Head of caudate nucleus (tissue), 42 donors: ENCODE measurements at regions of chr15 and their contacts with region 1.

Region 1: DNA sequence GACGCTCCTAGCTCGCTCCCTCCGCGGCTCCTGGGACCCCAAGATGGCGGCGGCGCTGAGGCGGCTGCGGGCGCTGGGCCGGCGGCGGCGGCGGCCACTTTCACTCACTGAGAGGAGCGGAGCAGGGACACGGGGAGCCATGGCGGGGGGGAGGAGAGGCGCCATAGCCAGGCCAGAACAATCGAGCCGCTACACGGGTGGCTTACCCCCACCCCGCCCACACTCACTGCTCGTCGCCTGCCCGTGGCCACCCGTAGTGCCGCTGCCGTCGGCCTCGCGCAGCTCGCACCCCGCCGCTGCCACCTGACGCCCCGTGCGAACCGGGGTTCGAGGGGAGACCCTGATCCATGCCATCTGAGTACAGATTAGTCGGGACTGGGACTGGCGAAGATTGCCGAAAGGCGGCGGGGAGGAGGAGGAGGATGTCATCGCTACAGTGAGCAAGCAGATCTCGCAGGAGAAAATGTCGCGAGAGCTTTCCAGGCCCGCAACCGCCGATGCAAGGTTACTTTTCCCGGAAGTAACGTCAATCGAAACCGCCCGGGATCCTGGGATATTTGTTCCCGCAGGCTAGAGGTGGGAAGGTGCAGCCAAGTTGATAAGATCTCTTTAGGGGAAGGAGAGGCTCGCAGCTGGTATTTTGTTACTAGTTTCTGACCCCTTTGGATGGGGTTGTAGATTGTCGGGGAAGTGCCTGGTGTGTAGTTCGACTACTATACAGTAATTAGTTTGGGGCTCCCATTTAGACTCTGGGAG is at the start of gene INO80:
- DNase-seq: peak; percentile 91 to 99 (median 97)

Region 2: DNA sequence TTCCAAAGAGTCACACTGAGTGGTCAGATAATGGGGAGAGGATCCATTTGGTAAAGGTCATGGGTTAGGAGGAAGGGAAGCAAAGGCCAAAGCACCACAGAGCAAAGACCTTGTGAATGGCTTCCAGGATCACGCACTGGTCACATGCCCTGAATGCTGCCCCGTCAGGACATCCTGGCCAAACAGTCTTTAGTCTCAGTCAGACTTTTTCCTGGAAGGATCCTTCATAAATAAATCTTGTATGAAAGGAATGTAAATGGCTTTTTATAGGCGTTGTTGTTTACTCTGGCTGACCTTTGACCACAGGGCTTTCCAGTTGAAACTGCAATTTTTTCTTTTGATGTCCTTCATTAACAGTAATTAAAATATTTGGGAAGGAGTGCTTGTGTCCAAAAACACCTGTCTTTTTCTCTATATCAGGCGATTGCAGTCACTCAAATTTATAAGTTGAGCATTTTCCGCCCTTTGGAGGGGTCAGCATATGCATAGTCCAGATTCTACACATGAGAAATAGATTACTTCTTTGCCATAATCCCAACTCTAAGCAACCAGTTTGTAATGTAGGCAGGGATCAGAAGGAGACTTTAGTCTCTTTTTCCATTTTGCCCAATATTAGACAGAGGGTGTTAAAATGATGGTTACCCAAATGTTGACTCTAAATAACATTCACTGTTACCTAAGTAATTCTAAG is 114.6 kb before region 1 on chr15:
- intact Hi-C with region 1: no loop called
- DNase-seq: no peak

Region 3: DNA sequence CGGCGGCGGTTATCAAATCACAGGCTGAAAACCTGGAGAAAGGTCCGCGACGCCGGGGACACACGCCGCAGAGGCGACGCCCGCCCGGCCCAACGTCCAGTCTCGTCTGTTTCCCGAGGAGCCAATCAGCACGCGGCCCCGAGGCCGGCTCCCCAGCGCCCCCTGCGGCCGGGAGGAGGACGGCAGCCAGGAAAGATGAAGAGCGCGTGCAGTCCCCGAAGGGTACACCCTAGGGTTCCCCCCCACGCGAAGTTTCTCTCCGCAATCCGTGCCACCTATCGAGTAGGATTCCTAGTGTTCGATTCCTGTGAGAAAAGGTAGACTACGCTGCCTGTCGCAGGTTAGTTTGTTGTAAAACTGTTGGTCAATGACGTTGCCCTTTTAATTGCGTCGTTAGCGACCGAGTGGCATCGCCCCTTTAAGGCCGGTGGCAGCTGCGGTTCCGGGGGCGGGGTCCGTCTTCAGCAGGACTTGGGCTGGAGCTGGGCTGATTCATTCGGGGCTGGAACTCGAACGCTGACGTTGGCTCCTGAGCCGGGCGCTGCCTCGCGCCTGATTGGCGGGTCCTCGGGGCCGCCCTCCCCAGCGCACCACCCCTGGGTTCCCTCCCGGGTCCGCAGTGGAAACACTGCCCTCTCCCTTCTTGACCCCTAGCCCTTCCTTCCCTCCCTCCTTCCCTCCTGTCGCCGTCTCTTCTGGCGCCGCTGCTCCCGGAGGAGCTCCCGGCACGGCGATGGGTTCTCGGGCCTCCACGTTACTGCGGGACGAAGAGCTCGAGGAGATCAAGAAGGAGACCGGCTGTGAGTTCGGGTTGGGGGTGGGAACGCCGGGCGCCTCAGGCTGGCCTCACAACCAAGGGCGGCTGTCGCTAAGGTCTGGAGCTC is 114.6 kb after region 1 on chr15 and contains the starts of genes CHP1 and EXD1:
- intact Hi-C with region 1: loop called (anchors 2 kb)
- DNase-seq: peak; percentile 94 to 99 (median 98)

Region 4: DNA sequence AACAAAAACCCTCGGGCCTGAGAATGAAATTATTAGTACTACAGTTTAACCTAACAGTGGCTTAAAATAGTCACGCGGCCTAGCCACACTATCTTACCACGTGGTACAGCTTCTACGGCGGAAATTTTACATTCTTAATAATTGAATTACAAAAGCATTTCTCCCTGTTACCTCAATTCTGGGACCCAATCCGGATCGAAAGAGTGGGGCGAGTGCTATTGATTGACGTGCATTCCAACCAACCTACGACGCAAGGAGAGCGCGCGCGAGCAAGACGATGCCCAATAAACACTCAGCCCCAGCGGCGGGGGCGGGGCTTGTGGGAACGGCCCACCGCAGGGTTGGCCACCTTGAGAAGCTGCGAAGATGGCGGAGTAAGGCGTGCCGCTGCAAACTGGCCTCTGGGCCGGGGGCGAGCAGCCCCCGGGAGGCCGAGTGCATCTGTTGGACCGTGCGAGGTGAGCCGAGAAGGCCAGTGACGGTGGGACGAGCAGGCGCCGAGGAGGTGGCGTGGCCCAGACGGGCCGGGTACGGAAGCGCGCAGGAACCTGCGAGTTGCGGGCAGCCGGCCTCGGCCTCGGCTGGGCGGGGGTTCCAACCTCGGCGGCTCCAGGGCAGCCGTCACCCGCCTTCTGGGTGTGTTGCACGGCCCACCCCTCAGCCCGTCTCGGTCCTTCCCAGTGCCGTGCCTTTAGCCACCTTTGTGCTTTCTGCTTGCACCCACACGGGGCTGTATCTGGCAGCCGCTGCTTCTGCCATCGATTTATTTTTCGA is 167.5 kb after region 1 on chr15:
- intact Hi-C with region 1: loop called (anchors 5 kb)
- DNase-seq: peak; percentile 95 to 99 (median 98)